Naive thymus-derived CD4-positive, alpha-beta T cell (primary cell): ENCODE measurements at regions of chr14 and their contacts with region 1.

Region 1: DNA sequence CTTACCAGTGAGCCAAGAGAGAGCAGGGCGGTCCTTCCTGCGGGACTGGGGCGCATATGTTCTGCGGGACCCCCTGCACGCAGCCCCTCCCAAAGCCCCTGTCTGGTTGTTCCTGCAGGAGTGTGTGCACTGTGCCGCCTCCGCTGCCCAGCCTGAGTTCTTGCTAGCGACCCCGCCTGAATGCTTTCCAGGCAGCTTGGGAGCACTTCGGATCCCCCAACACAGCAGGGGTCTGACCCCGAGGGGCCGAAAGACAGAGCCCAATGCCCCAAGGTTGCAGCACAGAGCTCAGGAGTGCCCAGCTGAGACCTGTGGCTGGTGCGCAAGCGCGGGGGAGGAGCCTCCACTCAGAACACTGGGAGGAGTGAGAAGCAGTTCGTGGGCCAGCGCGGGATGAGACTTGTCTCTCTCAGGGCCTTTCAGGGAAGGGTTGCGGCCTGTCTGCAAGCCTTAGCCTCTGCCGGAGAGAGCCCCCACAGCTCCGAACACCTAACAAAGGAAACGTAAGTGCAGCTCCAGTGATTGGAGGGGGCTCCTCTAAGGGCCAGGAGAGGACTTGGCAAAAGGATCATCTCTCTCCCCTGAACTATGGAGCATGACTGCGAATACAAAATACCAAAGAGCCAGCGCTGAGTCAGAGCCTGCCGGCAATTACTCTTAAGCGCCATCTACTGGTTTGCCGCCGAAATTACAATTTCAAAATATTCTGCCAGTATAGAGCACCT is 50.5 kb downstream of the GTF2A1 start:
- DNase-seq: peak; percentile 76 to 91 (median 89)
- ATAC-seq: peak; percentile 98
- H3K4me3 ChIP-seq: peak overlapping the region; percentile 79
- H3K4me3 Mint-ChIP-seq: peak overlapping the region; percentile 87 to 98 (median 93)
- H3K27ac ChIP-seq: peak overlapping the region; percentile 54
- H3K27ac Mint-ChIP-seq: peak overlapping the region; percentile 71 to 96 (median 92)
- H3K4me1 ChIP-seq: peaks cover 8 to 17% of the 10 kb centered on the region in 2 donors
- H3K4me1 Mint-ChIP-seq: peaks cover 11 to 46% (median 24%) of the 10 kb centered on the region in 7 donors
- H3K27me3 ChIP-seq: no peaks in the 10 kb centered on the region
- H3K27me3 Mint-ChIP-seq: no peaks in the 10 kb centered on the region

Region 2: GRCh38 chr14:80987235-80988032 is 182.8 kb before region 1 on chr14:
- CTCF ChIA-PET with region 1: interaction called, 7 read pairs
- POLR2A ChIA-PET with region 1: no interaction called
- intact Hi-C with region 1: loop called in 1 of 2 experiments (anchors 2 kb)
- DNase-seq: peak; percentile 13 to 74 (median 58)
- ATAC-seq: peak; percentile 85
- H3K4me3 ChIP-seq: no peak overlapping the region
- H3K4me3 Mint-ChIP-seq: no peak overlapping the region
- H3K27ac ChIP-seq: no peak overlapping the region
- H3K27ac Mint-ChIP-seq: no peak overlapping the region
- H3K4me1 ChIP-seq: no peaks in the 10 kb centered on the region
- H3K4me1 Mint-ChIP-seq: peaks cover 0 to 14% (median 0%) of the 10 kb centered on the region in 7 donors
- H3K27me3 ChIP-seq: no peaks in the 10 kb centered on the region
- H3K27me3 Mint-ChIP-seq: peaks cover 0 to 21% (median 11%) of the 10 kb centered on the region in 5 donors

Region 3: DNA sequence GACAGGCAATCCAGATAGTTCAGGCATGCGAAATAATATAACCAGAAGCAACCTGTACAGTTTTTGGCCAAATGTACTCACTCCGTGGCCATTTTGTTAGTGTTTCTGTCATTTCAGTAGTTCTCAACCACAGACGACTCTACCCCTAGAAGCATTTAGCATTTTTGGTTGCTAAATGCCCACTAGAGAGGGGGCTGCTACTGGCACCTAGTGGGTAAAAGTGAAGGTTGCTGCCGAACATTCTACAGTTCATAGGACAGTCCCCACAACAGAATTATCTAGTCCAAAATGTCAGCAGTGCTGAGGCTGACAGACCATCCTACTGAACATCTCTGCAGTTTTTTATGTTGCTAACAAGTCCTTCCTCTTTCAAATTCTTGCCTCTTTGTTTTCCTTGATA is 107.5 kb before region 1 on chr14:
- CTCF ChIA-PET with region 1: no interaction called
- POLR2A ChIA-PET with region 1: no interaction called
- intact Hi-C with region 1: loop called in 1 of 2 experiments (anchors 5 kb)
- DNase-seq: peak in 3 of 9 donors; percentile 1 to 14 (median 2)
- ATAC-seq: peak; percentile 51
- H3K4me3 ChIP-seq: no peak overlapping the region
- H3K4me3 Mint-ChIP-seq: no peak overlapping the region
- H3K27ac ChIP-seq: no peak overlapping the region
- H3K27ac Mint-ChIP-seq: no peak overlapping the region
- H3K4me1 ChIP-seq: no peaks in the 10 kb centered on the region
- H3K4me1 Mint-ChIP-seq: no peaks in the 10 kb centered on the region
- H3K27me3 ChIP-seq: no peaks in the 10 kb centered on the region
- H3K27me3 Mint-ChIP-seq: peaks cover 2 to 15% (median 8%) of the 10 kb centered on the region in 5 donors

Region 4: DNA sequence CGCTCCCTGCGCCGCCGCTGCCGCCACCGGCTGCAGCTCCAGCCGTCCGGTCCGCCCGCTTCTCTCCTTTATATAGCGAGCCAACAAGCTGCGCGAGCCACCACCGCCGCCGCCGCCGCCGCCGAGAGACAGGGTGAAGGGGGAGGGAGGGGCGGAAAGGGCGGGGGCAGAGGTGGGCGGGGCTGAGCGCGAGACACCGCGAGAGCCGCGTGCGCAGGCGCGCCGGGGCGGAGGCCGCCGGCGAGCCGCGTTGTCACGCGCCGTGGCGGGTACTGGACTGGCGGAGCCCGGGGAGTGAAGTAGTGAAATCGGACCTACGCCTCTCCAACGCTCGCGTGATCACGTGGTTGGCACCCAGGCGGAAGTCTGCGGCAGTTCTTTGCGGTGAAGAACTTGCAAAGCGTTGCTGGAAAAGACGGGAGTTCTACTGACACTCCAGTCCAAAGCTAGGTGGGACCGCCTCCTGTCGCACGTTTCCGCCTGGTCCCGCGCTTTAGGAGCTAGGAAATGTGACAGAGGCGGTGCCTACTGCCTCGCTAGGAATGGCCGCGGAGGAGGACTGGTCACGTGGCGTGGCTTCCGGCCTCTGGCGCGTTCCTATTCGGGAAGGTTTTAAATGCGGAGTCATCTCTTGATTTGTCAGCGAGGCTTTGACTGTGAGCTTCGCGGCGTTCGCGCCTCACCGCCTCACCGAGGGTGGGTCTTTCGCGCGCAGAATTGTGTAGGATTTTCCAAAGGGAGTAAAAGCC is 50.7 kb after region 1 on chr14 and contains the start of gene GTF2A1:
- CTCF ChIA-PET with region 1: interaction called, 4 read pairs
- POLR2A ChIA-PET with region 1: interaction called, 31 read pairs
- intact Hi-C with region 1: loop called (anchors 1 kb)
- DNase-seq: peak; percentile 92 to 96 (median 94)
- ATAC-seq: peak; percentile 84
- H3K4me3 ChIP-seq: peak within 1 kb of the TSS; percentile 94
- H3K4me3 Mint-ChIP-seq: peak within 1 kb of the TSS; percentile 92 to 100 (median 99)
- H3K27ac ChIP-seq: peak within 1 kb of the TSS; percentile 97
- H3K27ac Mint-ChIP-seq: peak within 1 kb of the TSS; percentile 98 to 100 (median 100)
- H3K4me1 ChIP-seq: peaks cover 22 to 28% of the 10 kb centered on the region in 2 donors
- H3K4me1 Mint-ChIP-seq: peaks cover 16 to 47% (median 33%) of the 10 kb centered on the region in 7 donors
- H3K27me3 ChIP-seq: no peaks in the 10 kb centered on the region
- H3K27me3 Mint-ChIP-seq: peaks cover 0 to 11% (median 0%) of the 10 kb centered on the region in 5 donors
- total RNA-seq, gene GTF2A1: 21.5 to 39.2 (median 33.7) TPM

Region 5: DNA sequence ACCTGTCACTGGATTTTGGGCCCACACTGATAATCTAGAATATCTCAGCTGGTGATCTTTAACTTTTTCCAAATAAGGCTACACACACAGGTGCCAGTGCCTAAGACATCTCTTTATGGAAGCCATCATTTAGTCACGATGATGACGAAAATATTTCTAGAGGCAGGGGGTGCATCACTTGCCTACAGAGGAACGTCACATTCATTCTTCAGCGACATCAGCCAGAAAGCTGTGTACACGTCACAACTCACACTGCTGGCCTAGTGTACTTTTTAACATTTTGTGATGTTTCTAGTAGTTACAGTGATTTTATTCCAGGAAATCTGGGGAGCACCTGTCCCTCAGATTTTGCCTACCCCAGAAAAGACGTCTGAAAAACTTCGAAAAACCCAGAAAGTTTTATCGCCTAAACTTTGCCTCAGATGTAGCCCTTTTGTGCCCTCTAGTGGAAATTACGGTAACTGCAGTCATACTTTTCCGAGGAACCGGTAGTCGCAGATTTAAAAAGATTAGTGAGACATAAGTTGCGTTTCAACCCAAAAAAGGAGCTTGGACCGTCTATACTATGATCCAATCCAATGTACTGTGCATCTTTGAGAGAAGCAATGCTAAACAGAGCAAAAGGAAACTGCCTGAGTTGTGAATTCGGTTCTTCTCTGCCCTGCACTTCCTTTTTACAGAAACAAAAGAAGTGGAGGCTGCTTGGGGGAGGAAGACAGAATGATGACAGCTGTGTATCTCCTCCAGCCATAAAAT is 294.2 kb after region 1 on chr14:
- CTCF ChIA-PET with region 1: no interaction called
- POLR2A ChIA-PET with region 1: interaction called, 5 read pairs
- intact Hi-C with region 1: loop called (anchors 1 kb)
- DNase-seq: peak; percentile 15 to 86 (median 75)
- ATAC-seq: peak; percentile 90
- H3K4me3 ChIP-seq: peak overlapping the region; percentile 85
- H3K4me3 Mint-ChIP-seq: peak overlapping the region; percentile 76 to 91 (median 88)
- H3K27ac ChIP-seq: peak overlapping the region; percentile 76
- H3K27ac Mint-ChIP-seq: peak overlapping the region; percentile 70 to 98 (median 91)
- H3K4me1 ChIP-seq: no peaks in the 10 kb centered on the region
- H3K4me1 Mint-ChIP-seq: peaks cover 0 to 14% (median 8%) of the 10 kb centered on the region in 7 donors
- H3K27me3 ChIP-seq: no peaks in the 10 kb centered on the region
- H3K27me3 Mint-ChIP-seq: no peaks in the 10 kb centered on the region